ENCODE measurements at regions of chr6 and their contacts with region 1.

Region 1: GRCh38 chr6:117817499-117817898 is 89.6 kb upstream of the SLC35F1 start:
- DNase-seq: no peak
- ATAC-seq: no peak
- H3K4me3 ChIP-seq: no peak overlapping the region
- H3K27ac ChIP-seq: no peak overlapping the region
- H3K4me1 ChIP-seq: no peaks in the 10 kb centered on the region
- H3K27me3 ChIP-seq: no peaks in the 10 kb centered on the region
- CTCF ChIP-seq: no peak
- POLR2A ChIP-seq: no peak
- RAD21 ChIP-seq: no peak

Region 2: GRCh38 chr6:116003668-116004067 is 1813.8 kb before region 1 on chr6:
- CTCF ChIA-PET with region 1: no interaction called
- POLR2A ChIA-PET with region 1: no interaction called
- dilution Hi-C with region 1: no loop called
- in situ Hi-C with region 1: no loop called
- intact Hi-C with region 1: loop called (anchors 5 kb)
- DNase-seq: no peak
- ATAC-seq: no peak
- H3K4me3 ChIP-seq: no peak overlapping the region
- H3K27ac ChIP-seq: no peak overlapping the region
- H3K4me1 ChIP-seq: peaks cover 3% of the 10 kb centered on the region
- H3K27me3 ChIP-seq: no peaks in the 10 kb centered on the region; the same call in 1 of the 2 replicates
- CTCF ChIP-seq: no peak
- POLR2A ChIP-seq: no peak
- RAD21 ChIP-seq: no peak